ENCODE measurements at regions of chr9 and their contacts with region 1.

Region 1: GRCh38 chr9:112020680-112021596 is 124.3 kb downstream of the UGCG start:
- DNase-seq: no peak
- H3K4me3 Mint-ChIP-seq: peak overlapping the region; percentile 28
- H3K27ac Mint-ChIP-seq: peak overlapping the region; percentile 92
- H3K4me1 Mint-ChIP-seq: peaks cover 34% of the 10 kb centered on the region
- H3K27me3 Mint-ChIP-seq: no peaks in the 10 kb centered on the region
- CTCF ChIP-seq: no peak

Region 2: DNA sequence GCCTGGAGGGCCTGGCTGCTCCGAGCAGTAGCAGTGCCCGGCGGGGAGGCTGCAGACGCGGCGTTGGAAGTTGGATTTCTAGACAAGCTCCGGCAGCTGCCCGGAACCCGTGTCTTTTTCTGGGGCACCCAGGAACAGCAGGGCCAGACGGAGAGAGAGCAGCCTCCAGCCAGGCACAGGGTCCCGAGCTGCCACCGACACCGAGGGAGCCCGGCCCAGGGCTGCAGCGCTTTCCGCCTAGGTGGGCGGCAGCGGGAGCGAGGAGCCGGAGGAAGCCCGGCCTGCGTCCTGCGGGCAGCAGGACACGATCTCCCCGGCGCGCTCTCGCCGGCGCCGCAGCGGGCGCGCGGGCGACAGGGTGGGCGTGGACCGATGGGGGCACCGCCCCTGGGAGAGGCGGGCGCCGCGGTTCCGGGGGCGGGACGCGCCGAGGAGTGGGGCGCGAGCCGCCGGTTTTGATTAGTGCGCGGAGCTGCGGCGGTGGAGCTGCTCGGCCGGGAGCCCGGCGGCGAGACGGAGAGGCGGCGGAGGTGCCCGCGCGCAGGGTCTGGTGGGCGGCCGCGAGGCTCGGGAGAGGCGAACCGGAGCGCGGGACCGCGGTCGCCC is 124.5 kb before region 1 on chr9 and contains the start of gene UGCG:
- CTCF ChIA-PET with region 1: no interaction called
- intact Hi-C with region 1: loop called (anchors 5 kb)
- DNase-seq: peak; percentile 90
- H3K4me3 Mint-ChIP-seq: no peak within 1 kb of the TSS
- H3K27ac Mint-ChIP-seq: peak within 1 kb of the TSS; percentile 96
- H3K4me1 Mint-ChIP-seq: no peaks in the 10 kb centered on the region
- H3K27me3 Mint-ChIP-seq: no peaks in the 10 kb centered on the region
- CTCF ChIP-seq: no peak
- total RNA-seq, gene UGCG: 75.5 and 84.8 TPM in 2 replicates

Region 3: GRCh38 chr9:111957856-111958652 is 62.9 kb before region 1 on chr9:
- CTCF ChIA-PET with region 1: interaction called, 3 read pairs
- intact Hi-C with region 1: loop called (anchors 2 kb)
- DNase-seq: peak; percentile 32
- H3K4me3 Mint-ChIP-seq: peak overlapping the region; percentile 57
- H3K27ac Mint-ChIP-seq: peak overlapping the region; percentile 79
- H3K4me1 Mint-ChIP-seq: peaks cover 73% of the 10 kb centered on the region
- H3K27me3 Mint-ChIP-seq: no peaks in the 10 kb centered on the region
- CTCF ChIP-seq: no peak

Region 4: DNA sequence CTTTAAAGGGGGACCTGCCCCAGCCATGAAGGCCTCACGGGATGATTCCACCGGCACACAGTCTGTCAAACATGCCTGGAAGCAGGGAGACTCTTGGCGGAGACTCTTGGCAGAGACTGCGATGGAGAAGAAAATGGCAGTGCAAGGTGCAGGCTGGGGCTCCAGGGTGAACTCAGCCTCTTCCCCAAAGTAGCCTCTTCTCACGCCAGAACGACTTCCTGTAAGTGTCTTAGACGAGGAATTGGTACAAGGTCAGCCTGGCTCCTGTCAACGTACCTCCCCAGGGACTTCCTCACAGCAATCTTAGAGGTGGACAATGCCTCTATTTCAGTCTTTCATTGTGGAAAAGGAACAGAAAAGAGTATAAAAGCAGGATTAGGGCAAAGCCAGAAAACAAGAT is 15.0 kb before region 1 on chr9:
- CTCF ChIA-PET with region 1: interaction called, 10 read pairs
- intact Hi-C with region 1: no loop called
- DNase-seq: no peak
- H3K4me3 Mint-ChIP-seq: no peak overlapping the region
- H3K27ac Mint-ChIP-seq: no peak overlapping the region
- H3K4me1 Mint-ChIP-seq: peaks cover 11% of the 10 kb centered on the region
- H3K27me3 Mint-ChIP-seq: no peaks in the 10 kb centered on the region
- CTCF ChIP-seq: no peak

Region 5: DNA sequence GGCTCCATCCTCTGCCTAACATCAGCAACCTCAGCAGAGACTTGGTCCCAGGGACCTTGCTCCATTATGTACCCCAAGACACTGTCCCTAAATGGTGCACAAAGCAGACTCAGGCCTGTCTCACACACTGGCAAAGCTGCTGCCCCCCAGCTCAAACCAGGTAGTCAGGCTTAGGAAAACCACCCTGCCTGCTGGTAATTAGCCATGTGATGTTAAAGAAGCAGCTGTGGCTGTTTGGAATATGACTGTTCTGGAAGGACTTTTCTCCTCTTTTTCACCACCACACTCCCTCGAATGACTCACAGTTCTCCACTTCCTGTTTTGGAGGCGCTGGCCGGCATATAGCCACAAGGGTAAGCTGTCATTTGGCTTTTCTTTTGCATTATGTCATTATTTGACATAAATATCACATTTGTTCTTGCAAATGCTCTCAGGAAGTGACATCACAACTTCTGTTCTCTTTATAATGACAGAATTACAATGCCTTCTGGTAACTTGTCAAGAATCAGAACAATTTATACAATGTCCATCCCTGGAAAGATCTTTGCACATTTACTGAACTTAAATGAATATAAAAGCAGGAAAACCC is 40.3 kb after region 1 on chr9:
- CTCF ChIA-PET with region 1: no interaction called
- intact Hi-C with region 1: no loop called
- DNase-seq: peak; percentile 61
- H3K4me3 Mint-ChIP-seq: no peak overlapping the region
- H3K27ac Mint-ChIP-seq: peak overlapping the region; percentile 41
- H3K4me1 Mint-ChIP-seq: peaks cover 26% of the 10 kb centered on the region
- H3K27me3 Mint-ChIP-seq: no peaks in the 10 kb centered on the region
- CTCF ChIP-seq: no peak

Region 6: DNA sequence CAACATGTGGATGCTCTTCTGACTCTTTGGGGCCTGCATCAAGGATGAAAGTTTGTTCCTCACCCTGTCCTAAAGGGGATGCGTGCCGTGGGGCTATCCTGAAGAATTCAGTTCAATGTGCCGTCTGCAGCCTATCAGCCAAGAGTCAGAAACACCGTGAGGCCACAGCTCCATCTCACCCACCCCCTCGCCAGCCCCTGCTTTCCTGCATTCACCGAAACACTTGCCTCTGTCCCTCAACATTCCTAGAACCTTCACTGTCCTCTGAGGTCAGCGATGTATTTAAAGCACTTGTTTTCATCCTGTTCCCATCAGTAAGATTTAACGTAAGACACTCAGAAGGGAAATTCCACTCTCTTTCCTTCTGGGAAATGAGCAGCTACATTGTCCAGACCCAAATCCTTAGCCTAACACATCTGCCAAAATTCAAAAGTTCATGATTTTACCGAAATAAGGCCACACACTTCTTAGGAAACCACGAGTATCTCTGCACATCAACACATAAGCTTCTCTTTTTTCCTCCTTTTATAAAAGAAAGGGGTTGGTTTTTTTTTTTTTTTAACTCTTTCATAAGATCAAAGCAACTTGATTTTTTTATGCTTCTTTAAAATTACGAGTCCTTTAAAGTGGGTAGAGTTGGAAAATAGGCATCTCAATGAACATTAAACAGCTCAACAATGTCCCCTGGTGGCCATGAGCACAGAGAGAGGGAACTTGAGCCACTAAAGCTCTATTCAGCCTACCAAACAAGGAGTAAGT is 53.5 kb after region 1 on chr9:
- CTCF ChIA-PET with region 1: interaction called, 3 read pairs
- intact Hi-C with region 1: loop called (anchors 2 kb)
- DNase-seq: peak; percentile 70
- H3K4me3 Mint-ChIP-seq: no peak overlapping the region
- H3K27ac Mint-ChIP-seq: peak overlapping the region; percentile 93
- H3K4me1 Mint-ChIP-seq: peaks cover 50% of the 10 kb centered on the region
- H3K27me3 Mint-ChIP-seq: no peaks in the 10 kb centered on the region
- CTCF ChIP-seq: peak; percentile 44

Measured in Calu3 (cell line).